ENCODE measurements at regions of chr7 and their contacts with region 1.

Region 1: GRCh38 chr7:100148559-100149350 is at the start of gene LAMTOR4:
- DNase-seq: peak; percentile 100
- ATAC-seq: peak; percentile 99
- H3K4me3 ChIP-seq: peak within 1 kb of the TSS; percentile 99
- H3K27ac ChIP-seq: peak within 1 kb of the TSS; percentile 86
- H3K4me1 ChIP-seq: peaks cover 5% of the 10 kb centered on the region; the same call in 1 of the 2 replicates
- H3K27me3 ChIP-seq: no peaks in the 10 kb centered on the region
- CTCF ChIP-seq: 0 out of 6 replicates have a peak, but pooled peaks of 1 of the 3 experiments have one; percentile 13
- EP300 ChIP-seq: peak in 1 of 2 experiments; percentile 14; a peak in 1 of 4 replicates
- POLR2A ChIP-seq: peak; percentile 91
- RAD21 ChIP-seq: no peak
- polyA plus RNA-seq, gene LAMTOR4: 188 to 262 TPM

Region 2: DNA sequence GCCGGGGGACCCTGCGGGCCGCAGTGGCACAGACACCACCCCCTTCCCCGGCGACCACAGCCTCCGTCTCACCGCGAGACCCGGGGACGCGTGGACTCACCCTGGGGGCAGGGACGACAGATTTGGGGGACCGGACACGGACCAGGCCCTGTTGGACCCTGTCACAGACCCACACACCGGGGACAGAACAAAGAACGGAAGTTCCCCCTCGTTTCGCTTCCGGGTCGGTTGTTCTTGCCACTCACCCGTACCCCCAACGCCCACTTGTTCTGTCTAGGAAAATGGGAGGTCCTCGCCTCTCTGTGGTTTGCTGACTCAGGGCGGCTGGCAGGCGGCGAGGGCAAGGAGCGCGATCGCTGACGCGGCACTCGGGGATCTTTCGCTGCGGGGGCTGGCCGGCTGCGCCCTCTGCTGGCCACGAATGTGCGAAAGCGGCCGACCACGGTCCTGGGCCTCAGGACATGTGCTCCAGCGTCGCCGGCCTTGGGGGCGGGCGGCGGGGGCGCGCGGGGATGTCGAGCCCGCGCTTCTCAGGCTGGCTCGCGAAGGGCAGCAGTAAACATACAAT is 67.1 kb before region 1 on chr7 and contains the start of gene ZNF3:
- CTCF ChIA-PET with region 1: no interaction called
- POLR2A ChIA-PET with region 1: interaction called, 3 read pairs
- RAD21 ChIA-PET with region 1: no interaction called
- SMC1A ChIA-PET with region 1: interaction called, 3 read pairs
- in situ Hi-C with region 1: no loop called
- intact Hi-C with region 1: loop called (anchors 1 kb)
- DNase-seq: peak; percentile 97
- ATAC-seq: peak; percentile 90
- H3K4me3 ChIP-seq: peak within 1 kb of the TSS; percentile 88
- H3K27ac ChIP-seq: peak within 1 kb of the TSS; percentile 89
- H3K4me1 ChIP-seq: peaks cover 4% of the 10 kb centered on the region
- H3K27me3 ChIP-seq: no peaks in the 10 kb centered on the region
- CTCF ChIP-seq: peak; percentile 84 to 97 (median 89); a peak in 5 of 6 replicates
- EP300 ChIP-seq: peak in 1 of 2 experiments; percentile 60; a peak in 1 of 4 replicates
- POLR2A ChIP-seq: peak; percentile 96
- RAD21 ChIP-seq: peak; percentile 66
- polyA plus RNA-seq, gene ZNF3: 17.2 to 19.0 TPM

Region 3: DNA sequence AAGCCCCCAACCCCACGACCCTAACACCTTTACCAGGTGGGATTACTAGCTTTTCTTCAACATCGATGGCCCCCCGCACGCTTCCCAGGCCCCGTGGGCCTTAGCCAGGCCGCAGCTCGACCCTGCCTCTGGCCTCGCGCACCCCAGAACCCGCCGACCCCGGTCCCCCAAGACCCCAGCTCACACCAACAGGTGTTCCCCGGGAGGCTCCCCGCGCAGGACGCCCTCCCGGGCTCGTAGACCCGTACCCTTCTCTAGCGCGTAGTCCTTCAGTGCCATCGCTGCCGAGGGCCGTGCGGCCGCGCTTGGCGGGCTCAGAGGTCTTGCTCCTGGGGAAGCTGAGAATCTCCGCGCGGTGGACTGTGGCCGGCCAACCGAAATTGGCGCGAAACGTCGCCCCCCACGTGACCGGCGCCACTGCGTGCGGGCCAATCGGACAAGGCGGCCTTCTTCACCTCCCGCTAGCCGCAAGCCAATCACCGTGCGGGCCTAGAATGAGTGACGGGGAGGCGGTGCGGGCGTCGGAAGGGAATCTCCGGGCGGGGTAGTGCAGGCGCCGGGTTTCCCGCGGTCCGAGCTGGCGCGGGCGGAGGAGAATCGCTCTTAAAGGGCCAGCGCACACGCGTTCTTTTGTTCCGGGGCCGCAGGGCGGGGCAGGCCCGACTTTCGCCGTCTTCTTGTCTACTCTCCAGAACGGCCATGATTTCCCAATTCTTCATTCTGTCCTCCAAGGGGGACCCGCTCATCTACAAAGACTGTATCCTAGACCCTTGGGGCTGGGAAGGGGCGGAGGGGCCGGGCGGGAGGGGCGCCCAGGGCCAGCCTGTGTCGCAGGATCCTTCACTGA is 47.5 kb before region 1 on chr7 and contains the starts of genes AP4M1 and MCM7:
- CTCF ChIA-PET with region 1: no interaction called
- POLR2A ChIA-PET with region 1: interaction called, 13 read pairs
- RAD21 ChIA-PET with region 1: no interaction called
- SMC1A ChIA-PET with region 1: no interaction called
- in situ Hi-C with region 1: no loop called
- intact Hi-C with region 1: loop called (anchors 2 kb)
- DNase-seq: peak; percentile 92
- ATAC-seq: peak; percentile 94
- H3K4me3 ChIP-seq: peak within 1 kb of the TSS; percentile 88
- H3K27ac ChIP-seq: peak within 1 kb of the TSS; percentile 97
- H3K4me1 ChIP-seq: peaks cover 16% of the 10 kb centered on the region
- H3K27me3 ChIP-seq: no peaks in the 10 kb centered on the region
- CTCF ChIP-seq: no peak
- EP300 ChIP-seq: no peak
- POLR2A ChIP-seq: peak; percentile 82
- RAD21 ChIP-seq: no peak
- polyA plus RNA-seq, gene AP4M1: 0.77 to 2.1 TPM
- polyA plus RNA-seq, gene MCM7: 227 to 234 TPM

Region 4: GRCh38 chr7:100137851-100138760 is 10.6 kb before region 1 on chr7:
- CTCF ChIA-PET with region 1: interaction called, 43 read pairs
- POLR2A ChIA-PET with region 1: interaction called, 22 read pairs
- RAD21 ChIA-PET with region 1: interaction called, 17 read pairs
- SMC1A ChIA-PET with region 1: interaction called, 12 read pairs
- in situ Hi-C with region 1: no loop called
- intact Hi-C with region 1: no loop called
- DNase-seq: no peak
- ATAC-seq: peak; percentile 73
- H3K4me3 ChIP-seq: no peak overlapping the region
- H3K27ac ChIP-seq: no peak overlapping the region
- H3K4me1 ChIP-seq: peaks cover 14% of the 10 kb centered on the region
- H3K27me3 ChIP-seq: no peaks in the 10 kb centered on the region
- CTCF ChIP-seq: no peak
- EP300 ChIP-seq: no peak
- POLR2A ChIP-seq: no peak
- RAD21 ChIP-seq: no peak

Region 5: DNA sequence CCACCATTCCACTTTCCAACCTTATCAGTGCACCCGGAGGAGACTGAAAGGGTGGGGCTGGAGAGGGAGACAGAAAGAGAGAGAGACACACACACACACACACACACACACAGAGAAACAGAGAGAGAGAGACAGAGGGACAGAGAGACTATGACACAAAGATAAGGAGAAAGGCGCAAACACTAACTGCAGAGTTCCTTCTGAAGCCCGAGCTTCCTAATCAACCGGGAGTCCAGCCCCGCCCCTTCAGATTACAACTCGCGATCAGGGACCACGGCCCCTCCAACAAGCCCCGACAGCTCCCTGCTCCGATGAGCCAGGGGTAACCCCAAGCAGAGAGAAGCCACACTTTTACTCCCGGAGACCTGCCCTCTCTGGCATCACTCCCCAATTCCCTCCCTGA is 19.2 kb after region 1 on chr7:
- CTCF ChIA-PET with region 1: interaction called, 3 read pairs
- POLR2A ChIA-PET with region 1: interaction called, 11 read pairs
- RAD21 ChIA-PET with region 1: interaction called, 5 read pairs
- SMC1A ChIA-PET with region 1: interaction called, 7 read pairs
- in situ Hi-C with region 1: no loop called
- intact Hi-C with region 1: no loop called
- DNase-seq: no peak
- ATAC-seq: peak; percentile 40
- H3K4me3 ChIP-seq: peak overlapping the region; percentile 60
- H3K27ac ChIP-seq: no peak overlapping the region
- H3K4me1 ChIP-seq: peaks cover 49% of the 10 kb centered on the region
- H3K27me3 ChIP-seq: peaks cover 4 to 6% of the 10 kb centered on the region in 2 experiments; a peak in 3 of 4 replicates
- CTCF ChIP-seq: no peak
- EP300 ChIP-seq: no peak
- POLR2A ChIP-seq: no peak
- RAD21 ChIP-seq: no peak

Region 6: GRCh38 chr7:100208911-100209408 is 60.2 kb after region 1 on chr7:
- CTCF ChIA-PET with region 1: interaction called, 5 read pairs
- POLR2A ChIA-PET with region 1: interaction called, 21 read pairs
- RAD21 ChIA-PET with region 1: interaction called, 13 read pairs
- SMC1A ChIA-PET with region 1: interaction called, 4 read pairs
- in situ Hi-C with region 1: no loop called
- intact Hi-C with region 1: no loop called
- DNase-seq: peak; percentile 87
- ATAC-seq: peak; percentile 89
- H3K4me3 ChIP-seq: peak overlapping the region; percentile 56; the same call in 1 of the 2 replicates
- H3K27ac ChIP-seq: peak overlapping the region; percentile 57
- H3K4me1 ChIP-seq: peaks cover 51% of the 10 kb centered on the region
- H3K27me3 ChIP-seq: no peaks in the 10 kb centered on the region
- CTCF ChIP-seq: peak in 1 of 3 experiments; percentile 25; a peak in 1 of 6 replicates
- EP300 ChIP-seq: peak; percentile 27 to 74; a peak in 3 of 4 replicates
- POLR2A ChIP-seq: no peak
- RAD21 ChIP-seq: no peak

Region 7: DNA sequence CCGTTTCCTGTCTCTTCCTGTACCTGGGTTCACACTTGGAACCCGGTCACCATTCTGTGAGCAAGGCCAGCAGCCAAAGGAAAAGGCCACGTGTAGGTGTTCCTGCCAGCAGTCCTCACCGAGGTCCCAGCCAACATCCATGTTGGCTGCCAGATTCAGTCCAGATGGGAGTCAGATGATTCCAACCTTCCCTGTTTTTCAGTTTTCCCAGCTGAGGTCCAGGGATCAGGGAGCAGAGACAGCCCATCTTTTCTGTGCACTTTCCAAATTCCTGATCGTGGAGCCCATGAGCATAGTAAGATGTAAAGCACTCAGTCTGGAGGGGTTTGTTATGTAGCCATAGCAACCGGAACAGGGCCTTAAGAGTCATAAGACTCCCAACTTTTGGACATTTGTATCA is 67.1 kb after region 1 on chr7:
- CTCF ChIA-PET with region 1: interaction called, 6 read pairs
- POLR2A ChIA-PET with region 1: interaction called, 21 read pairs
- RAD21 ChIA-PET with region 1: interaction called, 13 read pairs
- SMC1A ChIA-PET with region 1: interaction called, 4 read pairs
- in situ Hi-C with region 1: no loop called
- intact Hi-C with region 1: loop called (anchors 5 kb)
- DNase-seq: no peak
- ATAC-seq: no peak
- H3K4me3 ChIP-seq: no peak overlapping the region
- H3K27ac ChIP-seq: no peak overlapping the region
- H3K4me1 ChIP-seq: peaks cover 64% of the 10 kb centered on the region
- H3K27me3 ChIP-seq: no peaks in the 10 kb centered on the region
- CTCF ChIP-seq: no peak
- EP300 ChIP-seq: no peak
- POLR2A ChIP-seq: no peak
- RAD21 ChIP-seq: no peak